Aorta (tissue), 5 donors: ENCODE measurements at regions of chr1 and their contacts with region 1.

Region 1: GRCh38 chr1:178037503-178038253 is 56.2 kb upstream of the RASAL2 start:
- DNase-seq: peak; percentile 92 to 96
- ATAC-seq: peak; percentile 96
- H3K4me3 ChIP-seq: peak overlapping the region; percentile 65 to 70
- H3K27ac ChIP-seq: peak overlapping the region in 1 of 2 donors; percentile 43
- H3K4me1 ChIP-seq: no peaks in the 10 kb centered on the region
- H3K27me3 ChIP-seq: no peaks in the 10 kb centered on the region

Region 2: DNA sequence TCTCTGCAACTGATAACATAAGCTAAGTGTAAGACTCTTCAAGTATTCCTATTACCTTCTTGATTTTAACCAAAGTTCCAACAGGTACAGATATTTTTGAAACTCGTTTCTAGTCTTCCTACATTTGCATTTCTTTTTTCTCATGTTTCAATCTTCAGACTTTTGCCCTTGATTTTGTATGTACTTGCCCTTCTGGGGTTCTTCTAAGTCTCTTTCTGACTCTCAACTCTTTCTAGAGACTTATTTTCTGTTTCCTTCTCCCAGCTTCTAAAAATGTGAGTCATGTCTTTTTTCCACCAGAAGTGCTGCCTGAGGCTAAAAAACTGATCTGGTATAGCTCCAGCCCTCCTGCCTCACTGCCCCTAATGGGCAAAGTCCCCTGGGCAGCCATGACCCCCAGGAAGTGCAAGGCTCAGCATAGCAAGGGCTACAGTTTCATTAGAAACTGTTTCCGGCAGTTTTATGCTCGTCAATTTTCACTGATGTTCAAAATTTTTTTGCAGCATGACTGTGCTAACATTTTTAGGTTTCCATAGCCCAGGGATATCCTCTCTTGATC is 333.7 kb before region 1 on chr1:
- intact Hi-C with region 1: no loop called
- DNase-seq: no peak
- ATAC-seq: no peak
- H3K4me3 ChIP-seq: no peak overlapping the region
- H3K27ac ChIP-seq: no peak overlapping the region
- H3K4me1 ChIP-seq: no peaks in the 10 kb centered on the region
- H3K27me3 ChIP-seq: peaks cover 0 to 1% of the 10 kb centered on the region in 2 donors

Region 3: DNA sequence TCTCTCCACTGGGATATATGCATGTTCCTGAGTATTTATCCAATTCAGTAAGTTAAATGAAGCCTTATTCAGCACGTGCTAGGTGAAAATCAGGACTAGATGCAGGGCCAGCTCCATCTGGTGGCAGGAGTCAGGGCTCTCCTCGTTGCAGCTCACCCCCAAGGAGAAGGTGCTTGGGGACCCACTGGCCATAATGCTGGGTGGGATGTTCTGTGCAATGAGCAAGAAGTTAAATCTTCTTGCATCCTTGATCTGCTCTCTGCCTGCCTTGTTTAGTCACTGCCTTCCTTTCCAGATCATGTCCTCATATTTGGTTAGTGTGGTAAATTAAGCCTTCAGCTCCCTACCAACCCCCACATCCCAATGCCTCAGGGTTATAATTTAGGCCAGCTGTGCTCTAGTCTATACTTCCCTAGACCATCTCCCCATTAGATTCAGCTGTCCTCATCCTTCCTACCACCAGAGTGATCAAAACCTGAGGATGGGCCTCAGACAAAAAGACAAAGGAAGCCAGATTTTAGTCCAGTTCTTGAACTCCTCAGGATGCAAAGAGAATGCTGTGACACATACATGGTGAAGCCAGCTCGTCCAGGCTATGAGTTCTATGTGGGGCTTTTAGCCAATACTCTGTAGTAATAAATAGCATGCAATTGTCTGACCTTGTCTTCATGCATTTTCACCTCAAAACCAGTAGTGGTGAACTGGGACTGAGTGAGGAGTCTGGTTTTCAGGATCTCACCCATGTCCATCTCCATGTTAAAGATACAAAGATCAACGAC is 123.7 kb before region 1 on chr1:
- intact Hi-C with region 1: no loop called
- DNase-seq: no peak
- ATAC-seq: no peak
- H3K4me3 ChIP-seq: no peak overlapping the region
- H3K27ac ChIP-seq: no peak overlapping the region
- H3K4me1 ChIP-seq: no peaks in the 10 kb centered on the region
- H3K27me3 ChIP-seq: no peaks in the 10 kb centered on the region

Region 4: DNA sequence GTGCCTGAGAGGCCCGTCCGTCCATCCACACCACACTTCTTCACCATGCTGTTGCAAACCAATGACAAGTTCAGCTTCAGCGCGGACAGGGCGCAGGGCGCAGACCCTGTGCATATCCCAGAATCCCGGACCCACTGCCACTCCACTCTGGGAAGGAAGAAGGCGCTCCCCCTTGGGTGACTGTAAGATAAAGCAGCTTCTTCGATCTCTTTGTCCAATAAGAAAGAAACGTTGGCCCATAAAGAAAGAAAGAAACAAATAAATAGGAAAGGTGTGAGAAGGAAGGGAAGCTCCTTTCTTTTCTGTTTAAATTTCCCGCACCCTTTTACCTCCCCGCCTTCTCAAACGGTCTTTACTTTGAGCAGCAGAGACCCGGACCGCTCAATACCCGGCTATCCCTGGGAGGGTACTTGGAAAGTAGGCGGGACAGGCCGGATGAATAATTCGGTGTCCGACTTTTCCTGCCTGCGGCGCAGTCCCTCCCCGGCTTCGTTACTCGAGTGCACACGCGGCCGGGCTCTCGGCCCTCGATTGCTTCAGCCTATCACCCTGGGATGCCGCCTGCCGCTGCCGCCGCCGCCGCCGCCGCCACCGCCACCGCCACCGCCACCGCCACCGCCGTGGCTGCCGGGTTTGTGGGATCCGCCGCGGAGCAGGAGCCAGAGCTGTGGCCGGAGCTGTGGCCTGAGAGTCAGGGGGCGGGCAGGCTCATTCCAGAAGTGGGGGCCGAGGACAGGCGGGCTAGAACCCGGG is 55.7 kb after region 1 on chr1:
- intact Hi-C with region 1: loop called in 1 of 2 experiments (anchors 5 kb)
- DNase-seq: peak; percentile 95 to 96
- ATAC-seq: peak; percentile 98
- H3K4me3 ChIP-seq: peak overlapping the region; percentile 68 to 81
- H3K27ac ChIP-seq: peak overlapping the region; percentile 15 to 72
- H3K4me1 ChIP-seq: peaks cover 0 to 1% of the 10 kb centered on the region in 2 donors
- H3K27me3 ChIP-seq: no peaks in the 10 kb centered on the region